ENCODE measurements at regions of chr20 and their contacts with region 1.

Region 1: DNA sequence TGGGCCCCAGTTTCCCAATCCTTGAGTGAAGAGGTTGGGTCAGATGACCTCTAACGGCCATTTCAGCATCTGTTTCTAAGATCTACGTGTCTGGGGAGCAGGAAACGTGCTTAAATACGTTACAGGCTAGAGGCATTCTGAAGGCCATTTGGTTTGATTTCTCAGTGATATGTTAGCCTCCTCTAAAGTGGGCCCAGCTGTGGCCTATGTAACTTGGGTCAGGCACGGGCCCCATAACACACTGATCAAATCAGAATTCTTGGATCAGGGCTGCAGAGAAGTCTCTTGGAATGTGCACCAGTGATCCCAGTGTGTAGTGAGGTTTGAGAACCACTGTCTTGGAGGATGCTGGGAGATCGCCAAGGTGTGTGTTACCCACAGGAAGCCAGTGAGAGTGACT is 36.1 kb upstream of the TGM3 start:
- DNase-seq: no peak
- H3K4me3 ChIP-seq: no peak overlapping the region
- H3K27ac ChIP-seq: no peak overlapping the region
- H3K4me1 ChIP-seq: no peaks in the 10 kb centered on the region
- H3K27me3 ChIP-seq: no peaks in the 10 kb centered on the region
- CTCF ChIP-seq: no peak
- POLR2A ChIP-seq: no peak

Region 2: GRCh38 chr20:2230716-2231488 is 28.8 kb before region 1 on chr20:
- CTCF ChIA-PET with region 1: no interaction called
- POLR2A ChIA-PET with region 1: no interaction called
- dilution Hi-C with region 1: no loop called
- intact Hi-C with region 1: loop called (anchors 2 kb)
- DNase-seq: no peak
- H3K4me3 ChIP-seq: no peak overlapping the region
- H3K27ac ChIP-seq: no peak overlapping the region
- H3K4me1 ChIP-seq: no peaks in the 10 kb centered on the region
- H3K27me3 ChIP-seq: no peaks in the 10 kb centered on the region
- CTCF ChIP-seq: no peak
- POLR2A ChIP-seq: no peak

Region 3: GRCh38 chr20:2364044-2364443 is 104.3 kb after region 1 on chr20:
- CTCF ChIA-PET with region 1: no interaction called
- POLR2A ChIA-PET with region 1: no interaction called
- dilution Hi-C with region 1: no loop called
- intact Hi-C with region 1: no loop called
- DNase-seq: peak; percentile 53
- H3K4me3 ChIP-seq: no peak overlapping the region
- H3K27ac ChIP-seq: no peak overlapping the region
- H3K4me1 ChIP-seq: no peaks in the 10 kb centered on the region
- H3K27me3 ChIP-seq: peaks cover 4 to 11% of the 10 kb centered on the region in 2 experiments
- CTCF ChIP-seq: no peak
- POLR2A ChIP-seq: no peak